ENCODE measurements at regions of chr17 and their contacts with region 1.

Region 1: DNA sequence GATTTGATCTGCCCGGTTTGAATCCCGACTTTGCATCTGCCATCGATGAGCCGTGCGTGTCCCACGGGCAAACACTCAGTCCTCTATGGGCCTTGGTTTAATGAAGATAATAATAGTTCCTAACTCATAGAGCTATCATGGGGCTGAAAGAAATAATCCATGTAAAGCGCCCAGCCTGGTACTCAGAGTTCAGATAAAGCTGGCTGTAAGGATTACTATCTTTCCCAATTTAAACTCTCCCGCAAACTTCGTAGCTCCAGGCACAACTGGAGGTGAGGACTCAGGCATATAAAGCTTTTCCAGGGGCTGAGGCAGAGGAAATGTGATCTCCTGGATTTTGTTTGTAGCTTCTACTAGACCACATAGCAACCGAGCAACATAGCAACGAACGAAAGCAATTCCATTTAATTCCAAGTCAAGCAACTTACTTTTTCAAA is 16.3 kb downstream of the ALOX15 start:
- DNase-seq: no peak
- H3K4me3 ChIP-seq: no peak overlapping the region
- H3K27ac ChIP-seq: no peak overlapping the region
- H3K4me1 ChIP-seq: peaks cover 0 to 7% (median 4%) of the 10 kb centered on the region in 4 donors
- H3K27me3 ChIP-seq: peaks cover 0 to 2% of the 10 kb centered on the region in 2 donors
- CTCF ChIP-seq: no peak

Region 2: GRCh38 chr17:4565209-4566141 is 59.7 kb before region 1 on chr17:
- intact Hi-C with region 1: loop called (anchors 5 kb)
- DNase-seq: peak; percentile 55 to 72
- H3K4me3 ChIP-seq: no peak overlapping the region
- H3K27ac ChIP-seq: no peak overlapping the region
- H3K4me1 ChIP-seq: peaks cover 0 to 14% (median 13%) of the 10 kb centered on the region in 4 donors
- H3K27me3 ChIP-seq: no peaks in the 10 kb centered on the region
- CTCF ChIP-seq: peak; percentile 64 to 79

Measured in tibial artery (tissue), 4 donors.